ENCODE measurements at regions of chr1 and their contacts with region 1.

Region 1: GRCh38 chr1:45499415-45499769 is 481 bp downstream of the CCDC163 start:
- DNase-seq: peak in 1 of 4 experiments; percentile 55
- ATAC-seq: peak; percentile 3
- H3K4me3 ChIP-seq: peak overlapping the region; percentile 44
- H3K27ac ChIP-seq: peak overlapping the region; percentile 56; the same call in 2 of the 3 replicates
- H3K4me1 ChIP-seq: peaks cover 18 to 19% of the 10 kb centered on the region in 2 experiments; a peak in 4 of 5 replicates
- H3K27me3 ChIP-seq: no peaks in the 10 kb centered on the region
- CTCF ChIP-seq: 0 out of 6 replicates have a peak, but pooled peaks of 1 of the 3 experiments have one; percentile 7
- EP300 ChIP-seq: no peak
- POLR2A ChIP-seq: no peak
- RAD21 ChIP-seq: no peak

Region 2: GRCh38 chr1:45455162-45455561 is 44.2 kb before region 1 on chr1:
- CTCF ChIA-PET with region 1: no interaction called
- POLR2A ChIA-PET with region 1: no interaction called
- in situ Hi-C with region 1: no loop called
- intact Hi-C with region 1: no loop called
- DNase-seq: no peak
- ATAC-seq: no peak
- H3K4me3 ChIP-seq: no peak overlapping the region
- H3K27ac ChIP-seq: no peak overlapping the region
- H3K4me1 ChIP-seq: peaks cover 0 to 4% of the 10 kb centered on the region in 2 experiments; a peak in 1 of 5 replicates
- H3K27me3 ChIP-seq: no peaks in the 10 kb centered on the region; a peak in 1 of 5 replicates
- CTCF ChIP-seq: no peak
- EP300 ChIP-seq: no peak
- POLR2A ChIP-seq: no peak
- RAD21 ChIP-seq: no peak

Region 3: GRCh38 chr1:45512641-45513054 is 13.3 kb after region 1 on chr1:
- CTCF ChIA-PET with region 1: no interaction called
- POLR2A ChIA-PET with region 1: interaction called, 67 read pairs
- in situ Hi-C with region 1: no loop called
- intact Hi-C with region 1: no loop called
- DNase-seq: peak; percentile 57 to 88 (median 67)
- ATAC-seq: peak; percentile 78
- H3K4me3 ChIP-seq: no peak overlapping the region
- H3K27ac ChIP-seq: no peak overlapping the region
- H3K4me1 ChIP-seq: no peaks in the 10 kb centered on the region; a peak in 1 of 5 replicates
- H3K27me3 ChIP-seq: no peaks in the 10 kb centered on the region
- CTCF ChIP-seq: peak; percentile 84 to 89 (median 86)
- EP300 ChIP-seq: no peak
- POLR2A ChIP-seq: no peak
- RAD21 ChIP-seq: peak; percentile 87 to 95

Measured in K562 (cell line).